ENCODE measurements at regions of chr5 and their contacts with region 1.

Region 1: DNA sequence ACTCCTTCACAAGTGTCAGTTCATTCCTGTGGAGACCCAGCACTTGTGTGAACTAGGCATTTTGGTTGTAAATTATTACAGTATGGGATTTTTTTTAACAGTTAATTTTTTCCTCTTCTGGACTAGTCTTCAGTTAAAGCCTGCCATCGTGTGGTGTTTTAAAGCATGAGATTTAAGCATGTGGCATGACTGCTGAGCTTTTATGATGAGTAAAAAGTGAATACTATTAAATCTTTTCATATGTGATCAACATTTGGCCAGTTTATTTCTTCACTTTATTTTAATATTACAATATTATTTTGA is 25.0 kb downstream of the LMNB1 start:
- DNase-seq: no peak
- H3K4me3 ChIP-seq: no peak overlapping the region
- H3K27me3 ChIP-seq: no peaks in the 10 kb centered on the region
- CTCF ChIP-seq: peak; percentile 57

Region 2: GRCh38 chr5:126054577-126055347 is 747.2 kb before region 1 on chr5:
- CTCF ChIA-PET with region 1: no interaction called
- POLR2A ChIA-PET with region 1: no interaction called
- DNase-seq: no peak
- H3K4me3 ChIP-seq: no peak overlapping the region
- H3K27me3 ChIP-seq: no peaks in the 10 kb centered on the region
- CTCF ChIP-seq: no peak

Region 3: DNA sequence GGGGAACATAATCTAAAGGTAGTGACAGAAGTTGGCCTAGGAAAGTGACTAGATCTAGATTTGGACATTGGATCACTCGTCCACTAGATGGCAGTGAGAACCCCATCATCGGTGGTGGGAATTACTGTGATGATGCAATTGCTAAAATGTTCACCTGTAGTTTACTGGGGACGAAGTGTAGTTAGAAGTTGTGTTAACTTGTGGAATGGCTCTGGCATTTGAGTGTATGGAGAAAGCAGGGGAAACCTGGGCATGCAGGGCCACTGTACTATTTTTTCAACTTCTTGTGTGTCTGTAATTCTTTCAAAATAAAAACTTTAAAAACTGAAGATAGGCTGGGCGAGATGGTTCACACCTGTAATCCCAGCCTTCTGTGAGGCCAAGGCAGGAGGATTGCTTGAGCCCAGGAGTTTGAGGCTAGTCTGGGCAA is 125.7 kb before region 1 on chr5:
- CTCF ChIA-PET with region 1: interaction called, 66 read pairs
- POLR2A ChIA-PET with region 1: no interaction called
- DNase-seq: no peak
- H3K4me3 ChIP-seq: no peak overlapping the region
- H3K27me3 ChIP-seq: no peaks in the 10 kb centered on the region
- CTCF ChIP-seq: peak; percentile 78

Region 4: GRCh38 chr5:126707080-126707479 is 94.9 kb before region 1 on chr5:
- CTCF ChIA-PET with region 1: no interaction called
- POLR2A ChIA-PET with region 1: no interaction called
- DNase-seq: no peak
- H3K4me3 ChIP-seq: no peak overlapping the region
- H3K27me3 ChIP-seq: no peaks in the 10 kb centered on the region
- CTCF ChIP-seq: no peak

Region 5: GRCh38 chr5:126909856-126910255 is 107.9 kb after region 1 on chr5:
- CTCF ChIA-PET with region 1: no interaction called
- POLR2A ChIA-PET with region 1: no interaction called
- DNase-seq: no peak
- H3K4me3 ChIP-seq: no peak overlapping the region
- H3K27me3 ChIP-seq: no peaks in the 10 kb centered on the region
- CTCF ChIP-seq: no peak

Measured in BJ (cell line).